ENCODE measurements at regions of chr1 and their contacts with region 1.

Region 1: GRCh38 chr1:100351095-100351891 is 1.0 kb upstream of the CDC14A start:
- DNase-seq: peak; percentile 97 to 98 (median 98)
- H3K4me3 ChIP-seq: peak overlapping the region; percentile 90 to 99 (median 98)
- H3K27ac ChIP-seq: peak overlapping the region; percentile 85 to 94
- H3K4me1 ChIP-seq: peaks cover 17 to 68% (median 33%) of the 10 kb centered on the region in 4 experiments
- H3K27me3 ChIP-seq: no peaks in the 10 kb centered on the region

Region 2: GRCh38 chr1:99975529-99975928 is 375.8 kb before region 1 on chr1:
- CTCF ChIA-PET with region 1: no interaction called
- POLR2A ChIA-PET with region 1: no interaction called
- DNase-seq: no peak
- H3K4me3 ChIP-seq: no peak overlapping the region
- H3K27ac ChIP-seq: no peak overlapping the region
- H3K4me1 ChIP-seq: peaks cover 5 to 6% (median 6%) of the 10 kb centered on the region in 4 experiments
- H3K27me3 ChIP-seq: no peaks in the 10 kb centered on the region

Region 3: DNA sequence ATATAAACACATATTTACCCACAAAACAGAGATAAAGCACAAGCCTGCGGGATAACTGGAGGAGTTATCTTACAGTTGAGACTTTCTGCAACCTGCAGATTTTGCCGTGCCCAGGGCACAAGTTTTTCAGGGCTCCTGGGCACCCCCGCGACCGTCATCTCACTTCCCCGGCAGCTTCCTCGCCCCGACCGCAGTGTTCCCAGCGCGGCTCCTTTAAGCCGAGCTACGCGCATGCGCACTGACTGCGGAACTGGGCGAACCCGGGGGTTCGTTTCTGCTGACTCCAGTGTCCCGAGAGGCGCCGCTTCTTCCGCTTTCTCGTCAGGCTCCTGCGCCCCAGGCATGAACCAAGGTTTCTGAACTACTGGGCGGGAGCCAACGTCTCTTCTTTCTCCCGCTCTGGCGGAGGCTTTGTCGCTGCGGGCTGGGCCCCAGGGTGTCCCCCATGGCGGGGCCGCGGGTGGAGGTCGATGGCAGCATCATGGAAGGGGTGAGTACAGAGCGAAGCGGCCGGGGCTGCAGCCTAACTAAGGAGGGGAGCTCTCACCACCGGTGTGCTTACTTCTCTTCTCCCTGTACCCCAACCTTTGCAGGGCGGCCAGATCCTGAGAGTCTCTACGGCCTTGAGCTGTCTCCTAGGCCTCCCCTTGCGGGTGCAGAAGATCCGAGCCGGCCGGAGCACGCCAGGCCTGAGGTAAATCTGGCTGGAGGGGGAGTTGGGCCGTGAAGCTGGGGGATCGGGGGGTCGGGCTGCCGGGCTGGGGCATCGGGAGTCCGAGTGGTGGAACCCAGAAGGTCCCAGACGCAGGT is 85.2 kb before region 1 on chr1 and contains the start of gene RTCA:
- CTCF ChIA-PET with region 1: interaction called, 14 read pairs
- POLR2A ChIA-PET with region 1: interaction called, 8 read pairs
- DNase-seq: peak; percentile 97 to 99 (median 98)
- H3K4me3 ChIP-seq: peak within 1 kb of the TSS; percentile 68 to 96 (median 92)
- H3K27ac ChIP-seq: peak within 1 kb of the TSS; percentile 81 to 93
- H3K4me1 ChIP-seq: peaks cover 12 to 24% (median 14%) of the 10 kb centered on the region in 4 experiments
- H3K27me3 ChIP-seq: no peaks in the 10 kb centered on the region

Region 4: DNA sequence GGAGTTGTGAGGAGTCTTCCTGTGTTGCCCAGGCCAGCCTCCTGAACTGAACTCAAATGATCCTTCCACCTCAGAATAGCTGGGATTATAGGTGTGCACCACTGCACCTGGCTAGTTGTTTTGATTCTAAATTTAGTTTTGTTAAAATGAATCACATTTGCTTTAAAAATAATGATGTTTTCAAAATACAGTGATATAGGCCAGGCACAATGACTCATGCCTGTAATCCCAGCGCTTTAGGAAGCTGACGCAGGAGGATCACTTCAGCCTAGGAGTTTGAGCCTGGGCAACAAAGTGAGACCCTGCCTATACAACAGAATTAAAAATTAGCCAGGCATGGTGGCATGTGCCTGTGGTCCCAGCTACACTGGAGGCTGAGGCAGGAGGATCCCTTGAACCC is 61.0 kb before region 1 on chr1:
- CTCF ChIA-PET with region 1: interaction called, 15 read pairs
- POLR2A ChIA-PET with region 1: no interaction called
- DNase-seq: no peak
- H3K4me3 ChIP-seq: no peak overlapping the region
- H3K27ac ChIP-seq: peak overlapping the region in 1 of 2 experiments; percentile 11
- H3K4me1 ChIP-seq: peaks cover 0 to 16% (median 6%) of the 10 kb centered on the region in 4 experiments
- H3K27me3 ChIP-seq: no peaks in the 10 kb centered on the region

Region 5: GRCh38 chr1:100377590-100378361 is 26.5 kb after region 1 on chr1:
- CTCF ChIA-PET with region 1: no interaction called
- POLR2A ChIA-PET with region 1: no interaction called
- DNase-seq: no peak
- H3K4me3 ChIP-seq: no peak overlapping the region
- H3K27ac ChIP-seq: peak overlapping the region in 1 of 2 experiments; percentile 2
- H3K4me1 ChIP-seq: peaks cover 0 to 7% (median 0%) of the 10 kb centered on the region in 4 experiments
- H3K27me3 ChIP-seq: no peaks in the 10 kb centered on the region

Measured in common myeloid progenitor, CD34-positive (primary cell).